Calu3 (cell line): ENCODE measurements at regions of chr9 and their contacts with region 1.

Region 1: GRCh38 chr9:110977259-110977709 is 61.0 kb downstream of the LPAR1 start:
- DNase-seq: peak; percentile 66
- H3K4me3 Mint-ChIP-seq: peak overlapping the region; percentile 3
- H3K27ac Mint-ChIP-seq: peak overlapping the region; percentile 11
- H3K4me1 Mint-ChIP-seq: peaks cover 19% of the 10 kb centered on the region
- H3K27me3 Mint-ChIP-seq: no peaks in the 10 kb centered on the region
- CTCF ChIP-seq: no peak

Region 2: DNA sequence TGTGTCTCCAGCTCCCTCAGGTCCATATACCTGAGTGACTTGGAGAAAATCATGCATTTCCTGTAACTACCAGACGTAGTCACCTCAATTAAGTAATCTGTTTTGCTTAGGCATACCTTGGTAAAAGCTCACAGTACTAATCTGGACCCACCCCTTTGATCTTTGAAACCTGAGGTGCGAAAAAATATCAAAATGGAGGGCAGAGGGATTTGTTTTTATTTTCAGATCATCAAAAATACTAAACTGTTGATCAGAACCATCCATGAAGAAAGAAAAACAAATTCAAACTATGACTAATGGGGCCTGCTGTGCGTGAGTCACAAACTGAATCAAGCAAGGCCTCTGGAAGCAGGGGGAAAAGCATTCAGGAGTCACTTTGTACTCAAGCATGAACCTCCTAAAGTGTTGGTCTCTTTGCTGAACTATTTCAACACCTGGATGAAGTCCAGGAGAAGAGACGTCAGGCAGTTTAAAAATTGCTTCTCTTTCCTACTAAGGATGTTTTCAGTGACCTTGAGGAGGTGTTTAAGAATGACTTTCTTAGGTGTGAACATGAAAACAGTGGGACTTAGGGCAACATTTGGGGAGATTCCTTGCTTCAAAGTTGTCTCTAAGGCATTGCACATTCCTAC is 232.4 kb before region 1 on chr9:
- CTCF ChIA-PET with region 1: no interaction called
- intact Hi-C with region 1: loop called (anchors 10 kb)
- DNase-seq: peak; percentile 44
- H3K4me3 Mint-ChIP-seq: no peak overlapping the region
- H3K27ac Mint-ChIP-seq: peak overlapping the region; percentile 64
- H3K4me1 Mint-ChIP-seq: peaks cover 64% of the 10 kb centered on the region
- H3K27me3 Mint-ChIP-seq: no peaks in the 10 kb centered on the region
- CTCF ChIP-seq: no peak

Region 3: GRCh38 chr9:110874963-110875674 is 102.2 kb before region 1 on chr9:
- CTCF ChIA-PET with region 1: no interaction called
- intact Hi-C with region 1: no loop called
- DNase-seq: no peak
- H3K4me3 Mint-ChIP-seq: no peak overlapping the region
- H3K27ac Mint-ChIP-seq: no peak overlapping the region
- H3K4me1 Mint-ChIP-seq: no peaks in the 10 kb centered on the region
- H3K27me3 Mint-ChIP-seq: no peaks in the 10 kb centered on the region
- CTCF ChIP-seq: no peak

Region 4: GRCh38 chr9:111037381-111038305 is 60.4 kb after region 1 on chr9:
- CTCF ChIA-PET with region 1: no interaction called
- intact Hi-C with region 1: loop called (anchors 5 kb)
- DNase-seq: peak; percentile 56
- H3K4me3 Mint-ChIP-seq: peak overlapping the region; percentile 78
- H3K27ac Mint-ChIP-seq: peak overlapping the region; percentile 42
- H3K4me1 Mint-ChIP-seq: peaks cover 21% of the 10 kb centered on the region
- H3K27me3 Mint-ChIP-seq: no peaks in the 10 kb centered on the region
- CTCF ChIP-seq: no peak

Region 5: GRCh38 chr9:111212874-111213273 is 235.6 kb after region 1 on chr9:
- CTCF ChIA-PET with region 1: no interaction called
- intact Hi-C with region 1: no loop called
- DNase-seq: no peak
- H3K4me3 Mint-ChIP-seq: no peak overlapping the region
- H3K27ac Mint-ChIP-seq: no peak overlapping the region
- H3K4me1 Mint-ChIP-seq: no peaks in the 10 kb centered on the region
- H3K27me3 Mint-ChIP-seq: peaks cover 9% of the 10 kb centered on the region
- CTCF ChIP-seq: no peak